ENCODE measurements at regions of chr4 and their contacts with region 1.

Region 1: DNA sequence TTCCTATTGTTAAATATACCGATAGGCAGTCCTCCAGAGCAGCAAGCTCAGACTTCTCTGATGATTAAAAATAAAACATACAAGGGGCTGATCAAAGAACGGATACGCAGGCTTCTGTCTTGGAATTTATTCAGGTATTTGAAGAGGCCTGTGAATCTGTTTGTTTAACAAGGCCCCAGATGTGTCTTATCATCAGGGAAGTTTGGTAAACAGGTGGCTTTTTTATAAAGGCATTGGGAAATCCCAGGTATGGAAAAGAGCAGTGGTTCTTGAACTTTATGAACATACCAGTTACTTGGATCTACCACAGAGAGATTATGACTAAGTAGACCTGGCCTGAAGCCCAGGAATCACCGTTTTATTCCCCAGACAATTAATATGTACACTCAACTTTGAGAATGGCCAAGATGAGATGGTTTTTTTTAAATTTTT is 47.9 kb downstream of the SOWAHB start:
- DNase-seq: no peak
- H3K4me3 ChIP-seq: no peak overlapping the region
- H3K4me3 Mint-ChIP-seq: no peak overlapping the region
- H3K27ac ChIP-seq: no peak overlapping the region
- H3K27ac Mint-ChIP-seq: no peak overlapping the region
- H3K4me1 ChIP-seq: no peaks in the 10 kb centered on the region
- H3K4me1 Mint-ChIP-seq: no peaks in the 10 kb centered on the region
- H3K27me3 ChIP-seq: no peaks in the 10 kb centered on the region
- H3K27me3 Mint-ChIP-seq: no peaks in the 10 kb centered on the region
- CTCF ChIP-seq: no peak

Region 2: DNA sequence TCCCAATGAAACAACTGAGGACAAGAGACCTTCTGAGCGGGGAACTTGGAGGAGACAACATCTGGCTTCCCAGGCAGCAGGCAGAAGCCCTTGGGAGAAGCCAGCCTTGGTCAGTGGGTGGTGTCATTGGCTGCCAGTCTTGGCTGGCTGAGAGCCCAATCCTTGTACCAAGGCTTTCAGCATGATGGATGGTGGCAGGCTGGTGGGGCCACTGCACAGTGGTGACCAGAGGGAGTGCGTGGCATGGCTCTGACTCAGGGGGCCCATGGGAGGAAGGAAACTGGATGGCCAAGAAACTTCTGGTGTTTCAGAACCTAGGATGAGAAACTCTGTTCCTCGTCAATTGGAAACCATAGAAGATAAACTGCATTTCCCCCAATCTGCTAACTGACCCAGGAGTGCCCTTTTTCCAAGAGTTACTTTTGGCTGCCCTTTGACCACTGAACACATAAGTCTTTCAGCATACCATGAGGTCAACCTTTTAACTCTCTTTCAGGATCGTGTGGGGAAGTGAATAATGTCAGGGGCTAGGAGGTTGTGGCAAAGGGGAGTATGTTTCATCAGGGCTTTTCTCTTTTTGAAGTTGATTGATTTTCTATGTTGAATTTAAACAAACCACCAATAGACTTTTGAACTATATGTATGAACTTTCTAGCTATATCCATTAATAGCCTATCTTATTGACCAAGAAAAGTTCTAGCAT is 13.0 kb before region 1 on chr4:
- intact Hi-C with region 1: no loop called
- DNase-seq: no peak
- H3K4me3 ChIP-seq: no peak overlapping the region
- H3K4me3 Mint-ChIP-seq: no peak overlapping the region
- H3K27ac ChIP-seq: no peak overlapping the region
- H3K27ac Mint-ChIP-seq: no peak overlapping the region
- H3K4me1 ChIP-seq: no peaks in the 10 kb centered on the region
- H3K4me1 Mint-ChIP-seq: no peaks in the 10 kb centered on the region
- H3K27me3 ChIP-seq: no peaks in the 10 kb centered on the region
- H3K27me3 Mint-ChIP-seq: peaks cover 0 to 7% (median 6%) of the 10 kb centered on the region in 3 donors
- CTCF ChIP-seq: no peak

Region 3: GRCh38 chr4:76881375-76881774 is 31.3 kb after region 1 on chr4:
- intact Hi-C with region 1: loop called in 1 of 2 experiments (anchors 2 kb)
- DNase-seq: no peak
- H3K4me3 ChIP-seq: no peak overlapping the region
- H3K4me3 Mint-ChIP-seq: no peak overlapping the region
- H3K27ac ChIP-seq: no peak overlapping the region
- H3K27ac Mint-ChIP-seq: no peak overlapping the region
- H3K4me1 ChIP-seq: no peaks in the 10 kb centered on the region
- H3K4me1 Mint-ChIP-seq: no peaks in the 10 kb centered on the region
- H3K27me3 ChIP-seq: no peaks in the 10 kb centered on the region
- H3K27me3 Mint-ChIP-seq: peaks cover 2 to 7% (median 6%) of the 10 kb centered on the region in 3 donors
- CTCF ChIP-seq: no peak

Measured in CD14-positive monocyte (primary cell).